ENCODE measurements at regions of chr1 and their contacts with region 1.

Region 1: GRCh38 chr1:21232044-21232443 is 55.3 kb upstream of the EIF4G3 start:
- DNase-seq: no peak
- ATAC-seq: peak; percentile 72
- H3K4me3 Mint-ChIP-seq: no peak overlapping the region
- H3K27ac Mint-ChIP-seq: no peak overlapping the region
- H3K4me1 Mint-ChIP-seq: no peaks in the 10 kb centered on the region
- H3K27me3 Mint-ChIP-seq: no peaks in the 10 kb centered on the region
- CTCF ChIP-seq: peak; percentile 43

Region 2: GRCh38 chr1:21175324-21175669 is 56.7 kb before region 1 on chr1:
- CTCF ChIA-PET with region 1: no interaction called
- POLR2A ChIA-PET with region 1: no interaction called
- intact Hi-C with region 1: no loop called
- DNase-seq: no peak
- ATAC-seq: no peak
- H3K4me3 Mint-ChIP-seq: peak overlapping the region; percentile 91
- H3K27ac Mint-ChIP-seq: peak overlapping the region; percentile 92
- H3K4me1 Mint-ChIP-seq: peaks cover 32% of the 10 kb centered on the region
- H3K27me3 Mint-ChIP-seq: no peaks in the 10 kb centered on the region
- CTCF ChIP-seq: no peak

Region 3: GRCh38 chr1:21244986-21245687 is 13.1 kb after region 1 on chr1:
- CTCF ChIA-PET with region 1: interaction called, 10 read pairs
- POLR2A ChIA-PET with region 1: no interaction called
- intact Hi-C with region 1: no loop called
- DNase-seq: no peak
- ATAC-seq: peak; percentile 28
- H3K4me3 Mint-ChIP-seq: no peak overlapping the region
- H3K27ac Mint-ChIP-seq: no peak overlapping the region
- H3K4me1 Mint-ChIP-seq: no peaks in the 10 kb centered on the region
- H3K27me3 Mint-ChIP-seq: no peaks in the 10 kb centered on the region
- CTCF ChIP-seq: no peak

Region 4: DNA sequence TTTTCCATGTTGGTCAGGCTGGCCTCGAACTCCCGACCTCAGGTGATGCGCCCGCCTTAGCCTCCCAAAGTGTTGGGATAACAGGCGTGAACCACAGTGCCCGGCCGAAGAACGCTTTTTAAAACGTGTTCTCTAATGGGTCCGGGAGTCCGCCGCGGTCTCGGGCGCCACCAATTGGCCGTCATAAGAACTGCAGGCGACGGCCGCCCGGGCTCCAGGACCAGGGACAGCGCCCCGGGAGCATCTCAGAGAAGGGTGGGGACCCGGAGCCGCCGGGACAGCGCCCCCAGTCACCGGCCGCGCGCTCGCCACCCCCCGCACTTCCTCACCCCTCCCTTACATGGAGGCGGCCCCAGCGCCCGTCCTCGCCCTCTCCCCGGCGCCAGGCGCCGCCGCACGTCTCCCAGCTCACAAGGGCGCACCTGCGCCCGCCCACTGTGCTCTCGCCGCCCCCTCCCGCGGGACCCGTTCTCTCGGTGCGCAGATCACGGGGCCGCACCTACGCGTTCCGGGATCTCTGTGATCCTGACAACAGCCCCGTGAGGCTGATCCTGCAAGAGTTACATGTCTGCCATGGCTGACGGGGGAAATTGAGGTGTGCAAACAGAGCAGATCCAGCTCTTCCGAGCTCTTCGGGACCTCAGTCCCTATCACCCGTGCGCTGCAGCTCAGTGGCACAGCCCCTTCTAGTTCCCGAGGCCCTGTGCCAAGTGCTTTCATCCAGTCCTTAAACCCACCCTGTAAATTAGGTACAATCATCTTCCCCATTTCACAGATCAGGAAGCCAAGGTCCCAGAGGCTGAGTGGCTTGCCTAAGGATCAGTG is 427.3 kb after region 1 on chr1:
- CTCF ChIA-PET with region 1: no interaction called
- POLR2A ChIA-PET with region 1: no interaction called
- intact Hi-C with region 1: loop called (anchors 1 kb)
- DNase-seq: peak; percentile 77
- ATAC-seq: peak; percentile 97
- H3K4me3 Mint-ChIP-seq: peak overlapping the region; percentile 32
- H3K27ac Mint-ChIP-seq: no peak overlapping the region
- H3K4me1 Mint-ChIP-seq: peaks cover 11% of the 10 kb centered on the region
- H3K27me3 Mint-ChIP-seq: peaks cover 25% of the 10 kb centered on the region
- CTCF ChIP-seq: no peak

Measured in activated B cell treated with CpG ODN at 0.5 μM for 24 hours (primary cell).